CD8-positive, alpha-beta T cell (primary cell): ENCODE measurements at regions of chr11 and their contacts with region 1.

Region 1: GRCh38 chr11:72430741-72431570 is 3.4 kb downstream of the CLPB start:
- DNase-seq: peak in 5 of 9 experiments; percentile 29 to 64 (median 49)
- ATAC-seq: no peak
- H3K4me3 ChIP-seq: no peak overlapping the region
- H3K4me3 Mint-ChIP-seq: no peak overlapping the region
- H3K27ac ChIP-seq: no peak overlapping the region
- H3K27ac Mint-ChIP-seq: peak overlapping the region; percentile 23
- H3K4me1 ChIP-seq: peaks cover 9% of the 10 kb centered on the region
- H3K4me1 Mint-ChIP-seq: peaks cover 36% of the 10 kb centered on the region
- H3K27me3 ChIP-seq: no peaks in the 10 kb centered on the region
- H3K27me3 Mint-ChIP-seq: no peaks in the 10 kb centered on the region
- CTCF ChIP-seq: peak; percentile 58

Region 2: GRCh38 chr11:71787098-71787823 is 643.7 kb before region 1 on chr11:
- CTCF ChIA-PET with region 1: no interaction called
- POLR2A ChIA-PET with region 1: no interaction called
- intact Hi-C with region 1: loop called in 1 of 2 experiments (anchors 5 kb)
- DNase-seq: peak; percentile 77 to 97 (median 90)
- ATAC-seq: peak; percentile 96
- H3K4me3 ChIP-seq: peak overlapping the region; percentile 84 to 96
- H3K4me3 Mint-ChIP-seq: peak overlapping the region; percentile 94
- H3K27ac ChIP-seq: peak overlapping the region; percentile 80 to 97
- H3K27ac Mint-ChIP-seq: peak overlapping the region; percentile 95
- H3K4me1 ChIP-seq: no peaks in the 10 kb centered on the region
- H3K4me1 Mint-ChIP-seq: peaks cover 6% of the 10 kb centered on the region
- H3K27me3 ChIP-seq: no peaks in the 10 kb centered on the region
- H3K27me3 Mint-ChIP-seq: no peaks in the 10 kb centered on the region
- CTCF ChIP-seq: no peak

Region 3: DNA sequence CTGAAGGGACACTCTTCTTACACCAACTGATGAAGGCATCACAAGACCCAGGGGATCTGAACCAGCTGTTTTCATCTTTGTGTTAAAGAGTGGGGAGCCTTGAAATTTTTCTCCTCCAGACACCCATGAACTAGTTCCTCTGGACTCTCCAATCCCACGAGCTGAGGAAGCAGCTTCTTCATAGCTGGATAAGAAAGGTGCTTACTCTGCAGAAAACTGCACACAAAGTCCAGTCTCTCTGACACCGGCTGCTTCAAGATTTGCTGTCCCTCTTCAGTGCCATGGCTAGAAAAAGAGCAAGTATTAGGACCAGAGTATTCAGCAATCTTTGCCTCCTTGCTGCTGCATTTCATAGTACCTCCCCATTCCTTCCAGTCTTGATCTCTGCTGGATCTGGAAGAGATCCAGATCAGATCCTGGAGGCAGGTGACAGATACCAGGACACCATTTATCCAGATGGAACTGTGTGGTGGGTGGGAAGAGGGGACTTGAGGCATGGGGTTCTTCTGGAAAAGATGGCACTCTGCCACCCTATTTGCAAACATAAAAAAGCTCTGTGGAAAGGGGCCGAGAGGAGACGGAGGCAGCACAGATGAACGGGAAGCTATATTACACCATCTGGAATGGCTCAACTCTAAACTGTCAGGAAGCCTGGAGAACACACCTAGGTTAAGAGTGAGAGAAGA is 406.7 kb before region 1 on chr11:
- CTCF ChIA-PET with region 1: interaction called, 3 read pairs
- POLR2A ChIA-PET with region 1: no interaction called
- intact Hi-C with region 1: loop called (anchors 2 to 5 kb)
- DNase-seq: no peak
- ATAC-seq: no peak
- H3K4me3 ChIP-seq: no peak overlapping the region
- H3K4me3 Mint-ChIP-seq: no peak overlapping the region
- H3K27ac ChIP-seq: no peak overlapping the region
- H3K27ac Mint-ChIP-seq: no peak overlapping the region
- H3K4me1 ChIP-seq: peaks cover 22% of the 10 kb centered on the region
- H3K4me1 Mint-ChIP-seq: peaks cover 41% of the 10 kb centered on the region
- H3K27me3 ChIP-seq: no peaks in the 10 kb centered on the region
- H3K27me3 Mint-ChIP-seq: no peaks in the 10 kb centered on the region
- CTCF ChIP-seq: no peak

Region 4: DNA sequence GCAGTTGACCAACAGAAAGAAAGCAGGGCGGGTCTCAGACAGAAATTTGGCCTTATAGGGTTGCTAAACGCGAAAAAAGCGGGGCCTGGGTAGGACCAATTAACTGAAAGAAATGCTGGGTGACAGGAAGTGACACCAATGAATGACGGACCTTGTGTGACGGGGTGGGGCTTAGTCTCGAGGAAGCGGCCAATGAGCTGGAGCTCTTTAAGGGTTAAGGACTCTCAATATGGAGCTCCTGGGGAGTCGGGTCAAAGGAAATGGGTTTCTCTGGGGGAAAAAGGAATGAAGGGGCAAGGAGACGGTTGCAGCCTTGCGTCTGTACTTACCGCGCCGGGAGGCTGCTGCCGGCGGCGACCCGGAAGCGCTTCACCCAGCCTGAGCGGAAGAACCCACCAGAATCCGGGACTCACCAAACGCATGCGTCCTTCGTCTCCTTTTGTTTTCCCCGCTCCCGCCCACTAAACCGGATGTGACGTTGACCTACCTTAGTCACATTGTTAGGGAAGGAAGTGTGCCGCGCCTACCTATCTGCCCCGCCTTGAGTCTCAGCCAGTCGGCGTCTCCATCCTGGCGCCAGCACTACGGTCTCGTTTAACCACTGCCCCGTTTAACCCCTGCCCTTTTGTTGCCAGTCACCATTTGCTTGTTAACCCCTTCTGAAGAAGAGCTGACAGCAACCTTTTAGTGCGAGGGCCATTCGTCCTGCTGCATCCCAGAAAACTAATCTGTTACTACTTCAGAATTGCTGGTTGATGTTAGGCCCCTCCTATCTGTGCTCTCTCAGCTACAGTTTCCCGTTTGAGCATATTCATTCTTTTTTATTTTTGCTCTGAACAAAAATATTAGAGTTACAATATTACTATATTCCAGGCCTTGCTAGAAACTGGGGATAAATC is 318.4 kb before region 1 on chr11 and contains the start of gene ANAPC15:
- CTCF ChIA-PET with region 1: no interaction called
- POLR2A ChIA-PET with region 1: no interaction called
- intact Hi-C with region 1: loop called in 1 of 2 experiments (anchors 2 kb)
- DNase-seq: peak; percentile 95 to 100 (median 98)
- ATAC-seq: peak; percentile 85
- H3K4me3 ChIP-seq: peak within 1 kb of the TSS; percentile 63 to 65
- H3K4me3 Mint-ChIP-seq: peak within 1 kb of the TSS; percentile 96
- H3K27ac ChIP-seq: peak within 1 kb of the TSS; percentile 88 to 94
- H3K27ac Mint-ChIP-seq: peak within 1 kb of the TSS; percentile 99
- H3K4me1 ChIP-seq: peaks cover 16% of the 10 kb centered on the region
- H3K4me1 Mint-ChIP-seq: peaks cover 23% of the 10 kb centered on the region
- H3K27me3 ChIP-seq: no peaks in the 10 kb centered on the region
- H3K27me3 Mint-ChIP-seq: peaks cover 4% of the 10 kb centered on the region
- CTCF ChIP-seq: no peak
- total RNA-seq, gene ANAPC15: 42.1 to 46.2 TPM

Region 5: GRCh38 chr11:72293910-72294615 is 136.9 kb before region 1 on chr11:
- CTCF ChIA-PET with region 1: interaction called, 3 read pairs
- POLR2A ChIA-PET with region 1: interaction called, 3 read pairs
- intact Hi-C with region 1: loop called in 1 of 2 experiments (anchors 5 kb)
- DNase-seq: no peak
- ATAC-seq: no peak
- H3K4me3 ChIP-seq: no peak overlapping the region
- H3K4me3 Mint-ChIP-seq: no peak overlapping the region
- H3K27ac ChIP-seq: no peak overlapping the region
- H3K27ac Mint-ChIP-seq: no peak overlapping the region
- H3K4me1 ChIP-seq: no peaks in the 10 kb centered on the region
- H3K4me1 Mint-ChIP-seq: no peaks in the 10 kb centered on the region
- H3K27me3 ChIP-seq: no peaks in the 10 kb centered on the region
- H3K27me3 Mint-ChIP-seq: no peaks in the 10 kb centered on the region
- CTCF ChIP-seq: no peak

Region 6: GRCh38 chr11:72441752-72442207 is 10.8 kb after region 1 on chr11:
- CTCF ChIA-PET with region 1: interaction called, 10 read pairs
- POLR2A ChIA-PET with region 1: no interaction called
- intact Hi-C with region 1: no loop called
- DNase-seq: no peak
- ATAC-seq: no peak
- H3K4me3 ChIP-seq: no peak overlapping the region
- H3K4me3 Mint-ChIP-seq: no peak overlapping the region
- H3K27ac ChIP-seq: no peak overlapping the region
- H3K27ac Mint-ChIP-seq: no peak overlapping the region
- H3K4me1 ChIP-seq: peaks cover 3% of the 10 kb centered on the region
- H3K4me1 Mint-ChIP-seq: peaks cover 7% of the 10 kb centered on the region
- H3K27me3 ChIP-seq: no peaks in the 10 kb centered on the region
- H3K27me3 Mint-ChIP-seq: peaks cover 6% of the 10 kb centered on the region
- CTCF ChIP-seq: no peak

Region 7: DNA sequence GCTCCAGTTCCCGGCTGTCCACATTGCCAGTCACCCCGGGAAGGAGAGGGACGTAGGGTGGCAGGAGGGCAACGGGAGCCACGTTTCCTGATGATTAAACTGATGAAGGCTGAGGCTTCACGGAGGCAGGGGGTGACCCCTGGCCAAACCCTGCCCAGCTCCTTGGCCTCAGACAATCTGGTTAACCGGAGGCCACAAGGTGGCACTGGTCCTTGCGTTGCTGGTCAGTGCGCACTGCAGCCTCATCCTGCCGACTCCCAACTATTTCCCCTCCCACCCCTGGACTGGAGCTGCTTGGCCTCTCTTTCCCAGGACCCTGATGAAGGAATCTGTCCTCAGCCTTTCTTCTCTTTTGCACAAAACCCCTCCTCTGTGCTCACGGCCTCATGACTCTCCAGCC is 167.9 kb after region 1 on chr11:
- CTCF ChIA-PET with region 1: no interaction called
- POLR2A ChIA-PET with region 1: no interaction called
- intact Hi-C with region 1: no loop called
- DNase-seq: no peak
- ATAC-seq: no peak
- H3K4me3 ChIP-seq: no peak overlapping the region
- H3K4me3 Mint-ChIP-seq: no peak overlapping the region
- H3K27ac ChIP-seq: no peak overlapping the region
- H3K27ac Mint-ChIP-seq: no peak overlapping the region
- H3K4me1 ChIP-seq: no peaks in the 10 kb centered on the region
- H3K4me1 Mint-ChIP-seq: no peaks in the 10 kb centered on the region
- H3K27me3 ChIP-seq: no peaks in the 10 kb centered on the region
- H3K27me3 Mint-ChIP-seq: peaks cover 11% of the 10 kb centered on the region
- CTCF ChIP-seq: no peak

Region 8: GRCh38 chr11:73597956-73598718 is 1167.2 kb after region 1 on chr11 and contains the start of gene FAM168A:
- CTCF ChIA-PET with region 1: no interaction called
- POLR2A ChIA-PET with region 1: no interaction called
- intact Hi-C with region 1: loop called in 1 of 2 experiments (anchors 2 kb)
- DNase-seq: peak; percentile 85 to 98 (median 93)
- ATAC-seq: peak; percentile 87
- H3K4me3 ChIP-seq: peak within 1 kb of the TSS; percentile 81 to 99
- H3K4me3 Mint-ChIP-seq: peak within 1 kb of the TSS; percentile 90
- H3K27ac ChIP-seq: peak within 1 kb of the TSS; percentile 76 to 83
- H3K27ac Mint-ChIP-seq: peak within 1 kb of the TSS; percentile 90
- H3K4me1 ChIP-seq: peaks cover 20% of the 10 kb centered on the region
- H3K4me1 Mint-ChIP-seq: peaks cover 46% of the 10 kb centered on the region
- H3K27me3 ChIP-seq: no peaks in the 10 kb centered on the region
- H3K27me3 Mint-ChIP-seq: no peaks in the 10 kb centered on the region
- CTCF ChIP-seq: no peak
- total RNA-seq, gene FAM168A: 18.4 to 18.8 TPM